ENCODE measurements at regions of chr17 and their contacts with region 1.

Region 1: GRCh38 chr17:44199553-44200477 is at the start of gene ATXN7L3:
- DNase-seq: peak; percentile 100
- CTCF ChIP-seq: no peak

Region 2: GRCh38 chr17:44324571-44325275 is 124.9 kb after region 1 on chr17 and contains the start of gene SLC25A39:
- in situ Hi-C with region 1: loop called (anchors 5 kb)
- DNase-seq: peak; percentile 96
- CTCF ChIP-seq: no peak

Region 3: GRCh38 chr17:44344939-44345453 is 145.2 kb after region 1 on chr17 and contains the start of gene GRN:
- in situ Hi-C with region 1: no loop called
- DNase-seq: peak; percentile 95
- CTCF ChIP-seq: no peak

Region 4: GRCh38 chr17:44503147-44504029 is 303.6 kb after region 1 on chr17 and contains the start of gene GPATCH8:
- in situ Hi-C with region 1: loop called (anchors 25 kb)
- DNase-seq: peak; percentile 97
- CTCF ChIP-seq: no peak

Measured in GM13977 (cell line).